ENCODE measurements at regions of chr7 and their contacts with region 1.

Region 1: DNA sequence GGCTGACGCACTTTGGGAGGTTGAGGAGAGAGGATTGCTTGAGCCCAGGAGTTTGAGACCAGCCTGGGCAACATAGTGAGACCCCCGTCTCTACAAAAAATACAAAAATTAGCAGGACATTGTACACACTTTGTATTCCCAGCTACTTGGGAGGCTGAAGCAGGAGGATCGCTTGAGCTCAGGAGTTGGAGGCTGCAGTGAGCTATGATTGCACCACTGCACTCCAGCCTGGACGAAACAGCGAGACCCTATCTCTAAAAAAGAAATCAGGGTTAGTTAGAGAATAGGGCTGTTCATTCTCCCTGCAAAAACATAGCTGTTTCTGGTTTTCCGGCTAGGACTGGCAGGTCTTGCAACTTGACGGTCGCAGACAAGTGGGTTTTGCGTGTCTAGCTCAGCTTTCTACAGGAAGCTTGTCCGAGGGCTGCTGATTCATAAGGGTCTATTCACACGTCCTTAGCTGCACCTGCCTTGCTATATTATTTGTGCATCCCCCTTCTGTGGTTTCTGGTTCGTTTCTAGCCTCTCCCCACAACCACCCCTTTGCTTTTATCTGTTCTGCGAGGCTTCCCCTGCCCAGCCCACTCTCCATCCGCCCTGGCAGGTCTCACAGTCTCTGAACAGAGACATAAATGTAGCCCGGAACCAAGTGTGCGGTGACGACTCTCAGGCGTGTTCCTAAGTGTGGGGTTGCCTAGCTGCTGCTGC is 10.7 kb downstream of the AMZ1 start:
- DNase-seq: peak in 9 of 10 donors; percentile 19 to 85 (median 69)
- ATAC-seq: peak; percentile 94
- H3K4me3 Mint-ChIP-seq: peak overlapping the region; percentile 62 to 86 (median 72)
- H3K27ac Mint-ChIP-seq: peak overlapping the region; percentile 57 to 92 (median 76)
- H3K4me1 Mint-ChIP-seq: peaks cover 13 to 34% (median 24%) of the 10 kb centered on the region in 4 donors
- H3K27me3 Mint-ChIP-seq: peaks cover 0 to 3% (median 0%) of the 10 kb centered on the region in 5 donors

Region 2: DNA sequence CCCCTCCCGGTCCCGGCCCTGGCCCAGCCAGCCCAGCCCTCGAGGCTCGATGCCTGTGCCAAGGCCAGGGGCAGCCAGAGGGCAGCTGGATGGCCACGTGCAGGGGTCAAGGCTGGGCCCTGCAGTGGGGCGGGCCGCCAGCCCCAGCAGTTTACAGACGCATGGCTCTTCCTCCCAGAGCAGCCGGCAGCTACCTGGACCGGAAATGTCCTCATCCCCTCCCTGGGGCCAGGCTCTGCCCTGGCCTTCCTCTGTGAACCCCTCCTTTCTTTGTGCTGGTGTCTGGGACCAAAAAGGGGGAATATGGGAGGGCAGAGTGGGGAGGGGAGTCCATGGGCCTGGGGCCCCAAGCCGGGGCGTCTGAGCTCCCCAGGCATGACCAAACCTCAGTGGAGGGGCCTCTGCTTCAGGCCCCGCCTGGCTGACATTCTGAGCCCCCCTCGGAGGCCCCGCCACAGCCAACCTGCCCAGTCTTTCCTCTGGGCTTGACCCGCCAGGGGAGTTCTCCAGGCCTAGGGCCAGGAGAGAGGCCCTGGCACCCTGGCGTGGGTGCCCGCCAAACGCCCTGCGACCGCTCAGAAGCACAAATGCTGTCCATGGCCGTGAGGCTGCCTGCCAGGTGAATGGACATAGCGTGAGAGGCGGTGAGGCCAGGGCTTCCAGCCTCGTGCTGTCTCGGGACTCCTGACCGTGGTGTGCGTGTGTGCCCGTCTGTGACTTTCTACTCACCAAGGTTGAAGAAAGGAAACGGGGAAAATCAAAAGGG is 35.4 kb before region 1 on chr7:
- POLR2A ChIA-PET with region 1: no interaction called
- DNase-seq: peak in 1 of 10 donors; percentile 47
- ATAC-seq: no peak
- H3K4me3 Mint-ChIP-seq: peak overlapping the region in 1 of 10 donors; percentile 39
- H3K27ac Mint-ChIP-seq: no peak overlapping the region
- H3K4me1 Mint-ChIP-seq: peaks cover 0 to 4% (median 0%) of the 10 kb centered on the region in 4 donors
- H3K27me3 Mint-ChIP-seq: peaks cover 0 to 12% (median 11%) of the 10 kb centered on the region in 5 donors

Region 3: DNA sequence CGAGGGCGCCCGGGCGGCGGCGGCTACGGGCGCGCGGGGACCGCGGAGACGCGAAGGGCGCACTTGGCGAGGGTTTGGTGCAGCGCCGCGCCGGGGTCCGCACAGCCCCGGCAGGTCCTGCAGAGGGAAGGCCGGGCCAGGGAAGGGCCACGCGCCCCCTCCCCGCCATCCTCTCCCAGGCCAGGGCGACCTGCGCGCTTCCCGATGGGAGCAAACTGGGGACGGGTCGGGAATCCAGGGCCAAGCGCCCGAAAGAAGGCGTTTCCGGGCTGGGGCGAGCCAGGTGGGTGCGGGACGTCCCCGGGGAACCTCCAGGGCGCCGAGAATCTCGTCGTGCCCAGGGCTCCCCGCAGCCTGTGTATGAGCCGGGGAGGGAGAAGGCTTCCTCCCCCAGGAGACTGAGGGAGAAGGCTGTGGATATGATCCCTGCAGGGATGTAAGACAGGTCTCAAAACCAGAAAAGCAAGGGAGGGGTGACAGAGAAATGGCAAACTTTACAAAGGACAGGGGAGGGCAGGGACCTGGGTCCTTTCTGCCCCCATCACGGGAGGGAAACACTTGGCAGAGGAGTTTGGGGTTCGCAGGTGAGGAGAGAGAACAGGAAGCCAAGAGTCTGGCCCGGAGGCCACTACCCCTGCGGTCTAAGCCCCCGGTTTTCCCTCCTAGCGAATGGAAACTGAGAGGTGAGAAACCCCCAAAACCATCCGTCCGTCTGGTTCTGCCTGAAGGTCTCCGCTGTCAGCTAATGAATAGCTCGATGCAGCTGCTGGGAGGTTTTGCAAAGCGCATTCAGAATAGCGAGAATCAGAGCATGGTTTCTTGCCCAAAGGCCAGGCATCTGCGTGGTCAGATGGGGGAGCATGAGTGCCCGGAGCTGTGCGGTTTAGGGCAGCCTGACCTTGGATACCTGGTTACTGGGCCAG is 10.1 kb before region 1 on chr7:
- POLR2A ChIA-PET with region 1: no interaction called
- DNase-seq: peak in 1 of 10 donors; percentile 36
- ATAC-seq: peak in 1 of 2 donors; percentile 30
- H3K4me3 Mint-ChIP-seq: peak overlapping the region in 9 of 10 donors; percentile 5 to 57 (median 38)
- H3K27ac Mint-ChIP-seq: peak overlapping the region in 1 of 10 donors; percentile 25
- H3K4me1 Mint-ChIP-seq: peaks cover 5 to 13% (median 8%) of the 10 kb centered on the region in 4 donors
- H3K27me3 Mint-ChIP-seq: peaks cover 17 to 53% (median 41%) of the 10 kb centered on the region in 5 donors

Region 4: GRCh38 chr7:2709553-2710285 is 11.0 kb after region 1 on chr7:
- POLR2A ChIA-PET with region 1: interaction called, 26 read pairs
- DNase-seq: peak; percentile 47 to 83 (median 80)
- ATAC-seq: peak; percentile 86 to 97
- H3K4me3 Mint-ChIP-seq: peak overlapping the region in 9 of 10 donors; percentile 42 to 79 (median 65)
- H3K27ac Mint-ChIP-seq: peak overlapping the region in 4 of 10 donors; percentile 13 to 61 (median 28)
- H3K4me1 Mint-ChIP-seq: peaks cover 16 to 42% (median 34%) of the 10 kb centered on the region in 4 donors
- H3K27me3 Mint-ChIP-seq: peaks cover 5 to 30% (median 8%) of the 10 kb centered on the region in 5 donors

Region 5: GRCh38 chr7:2719007-2719406 is 20.3 kb after region 1 on chr7:
- POLR2A ChIA-PET with region 1: interaction called, 11 read pairs
- DNase-seq: peak; percentile 53 to 82 (median 68)
- ATAC-seq: peak; percentile 56 to 58
- H3K4me3 Mint-ChIP-seq: peak overlapping the region; percentile 15 to 68 (median 50)
- H3K27ac Mint-ChIP-seq: peak overlapping the region in 8 of 10 donors; percentile 25 to 84 (median 60)
- H3K4me1 Mint-ChIP-seq: peaks cover 34 to 63% (median 58%) of the 10 kb centered on the region in 4 donors
- H3K27me3 Mint-ChIP-seq: peaks cover 0 to 17% (median 4%) of the 10 kb centered on the region in 5 donors

Measured in naive thymus-derived CD8-positive, alpha-beta T cell (primary cell).